ENCODE measurements at regions of chr17 and their contacts with region 1.

Region 1: DNA sequence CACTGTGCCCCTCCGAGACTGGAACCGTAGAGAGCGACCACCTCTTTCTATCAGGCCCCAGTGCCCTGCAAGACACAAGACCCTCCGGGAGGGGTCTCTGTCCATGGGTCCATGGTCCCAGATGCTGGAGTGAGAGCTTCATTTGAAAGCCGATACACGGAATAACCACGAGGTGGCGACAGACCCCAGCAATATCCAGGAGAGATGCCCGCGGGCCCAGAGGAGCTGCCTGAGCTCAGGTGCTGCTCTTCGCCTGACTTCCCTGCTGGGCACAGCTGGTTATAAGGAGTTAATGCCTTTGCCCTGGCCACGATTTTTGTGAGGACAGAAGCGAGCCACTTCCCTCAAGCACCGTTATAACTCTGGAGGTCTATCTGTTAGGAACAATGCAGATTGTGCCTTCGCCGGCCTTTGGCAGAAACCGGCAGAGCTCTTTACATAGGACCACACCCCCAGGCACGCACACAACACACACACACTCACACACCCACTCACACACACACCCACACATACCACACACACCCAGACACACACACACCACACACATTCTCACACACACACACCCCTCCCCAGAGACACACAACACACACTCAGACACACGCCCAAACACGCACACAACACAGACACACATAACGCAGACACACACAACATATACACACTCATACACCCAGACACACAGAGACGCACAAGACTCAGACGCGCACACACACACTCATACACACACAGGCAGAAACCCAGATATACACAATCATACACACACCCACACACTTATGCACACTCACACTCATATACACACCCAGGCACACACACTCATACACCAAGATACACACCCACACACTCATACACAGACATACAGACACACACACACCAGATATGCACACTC is 436.4 kb downstream of the SOX9 start:
- DNase-seq: peak; percentile 81
- ATAC-seq: peak; percentile 86
- H3K4me3 ChIP-seq: no peak overlapping the region
- H3K27ac ChIP-seq: no peak overlapping the region
- H3K4me1 ChIP-seq: peaks cover 23% of the 10 kb centered on the region
- H3K27me3 ChIP-seq: no peaks in the 10 kb centered on the region
- CTCF ChIP-seq: peak; percentile 97
- EP300 ChIP-seq: no peak
- POLR2A ChIP-seq: no peak
- RAD21 ChIP-seq: peak; percentile 96

Region 2: GRCh38 chr17:72515291-72516065 is 41.7 kb before region 1 on chr17:
- CTCF ChIA-PET with region 1: no interaction called
- POLR2A ChIA-PET with region 1: no interaction called
- in situ Hi-C with region 1: no loop called
- intact Hi-C with region 1: no loop called
- DNase-seq: no peak
- ATAC-seq: no peak
- H3K4me3 ChIP-seq: no peak overlapping the region
- H3K27ac ChIP-seq: no peak overlapping the region
- H3K4me1 ChIP-seq: peaks cover 87% of the 10 kb centered on the region
- H3K27me3 ChIP-seq: no peaks in the 10 kb centered on the region
- CTCF ChIP-seq: no peak
- EP300 ChIP-seq: no peak
- POLR2A ChIP-seq: no peak
- RAD21 ChIP-seq: no peak

Region 3: GRCh38 chr17:72609501-72609900 is 52.3 kb after region 1 on chr17:
- CTCF ChIA-PET with region 1: no interaction called
- POLR2A ChIA-PET with region 1: no interaction called
- in situ Hi-C with region 1: no loop called
- intact Hi-C with region 1: no loop called
- DNase-seq: no peak
- ATAC-seq: no peak
- H3K4me3 ChIP-seq: no peak overlapping the region
- H3K27ac ChIP-seq: no peak overlapping the region
- H3K4me1 ChIP-seq: peaks cover 34% of the 10 kb centered on the region
- H3K27me3 ChIP-seq: no peaks in the 10 kb centered on the region
- CTCF ChIP-seq: no peak
- EP300 ChIP-seq: no peak
- POLR2A ChIP-seq: no peak
- RAD21 ChIP-seq: no peak

Region 4: DNA sequence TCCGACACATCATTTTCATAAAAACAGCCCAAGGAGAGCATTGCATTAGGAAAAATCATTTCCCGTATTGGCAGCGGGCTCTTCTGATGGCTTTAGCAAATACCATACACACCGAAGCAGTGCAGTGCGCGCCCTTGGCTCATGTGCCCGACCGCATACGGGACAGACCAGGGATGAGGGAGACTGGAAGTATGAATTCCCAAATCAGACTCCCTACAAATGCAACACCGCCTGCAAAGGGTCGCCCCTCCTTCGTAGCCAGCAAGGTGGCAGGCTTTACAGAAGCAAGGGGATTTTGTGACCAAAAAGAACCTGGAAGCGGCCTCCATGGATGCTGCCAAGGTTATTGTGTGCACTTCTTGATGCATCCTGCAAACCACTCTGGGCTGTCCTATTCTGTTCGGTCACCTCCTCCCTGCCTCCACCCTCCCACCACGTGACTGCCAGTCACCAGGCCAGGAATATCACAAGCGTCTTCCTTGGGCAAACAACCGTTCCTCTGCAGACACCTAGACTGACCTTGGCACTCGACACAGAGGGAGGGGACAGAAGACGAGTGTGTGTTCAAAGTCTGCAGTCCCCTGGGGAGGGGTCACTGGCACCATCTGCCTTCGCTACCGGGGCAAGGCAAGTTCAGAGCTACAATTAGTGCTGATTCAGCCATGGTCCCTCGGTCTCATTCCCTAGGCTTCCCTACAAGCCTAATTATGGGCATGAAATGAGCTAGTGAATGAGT is 74.9 kb after region 1 on chr17:
- CTCF ChIA-PET with region 1: interaction called, 4 read pairs
- POLR2A ChIA-PET with region 1: interaction called, 3 read pairs
- in situ Hi-C with region 1: no loop called
- intact Hi-C with region 1: loop called (anchors 2 kb)
- DNase-seq: peak; percentile 98
- ATAC-seq: peak; percentile 93
- H3K4me3 ChIP-seq: peak overlapping the region; percentile 41 to 68 (median 47)
- H3K27ac ChIP-seq: peak overlapping the region; percentile 51
- H3K4me1 ChIP-seq: peaks cover 56% of the 10 kb centered on the region
- H3K27me3 ChIP-seq: no peaks in the 10 kb centered on the region
- CTCF ChIP-seq: peak; percentile 70
- EP300 ChIP-seq: peak; percentile 79 to 96; a peak in 3 of 4 replicates
- POLR2A ChIP-seq: peak; percentile 49 to 74; a peak in 3 of 4 replicates
- RAD21 ChIP-seq: no peak; the same call in 1 of the 2 replicates

Region 5: DNA sequence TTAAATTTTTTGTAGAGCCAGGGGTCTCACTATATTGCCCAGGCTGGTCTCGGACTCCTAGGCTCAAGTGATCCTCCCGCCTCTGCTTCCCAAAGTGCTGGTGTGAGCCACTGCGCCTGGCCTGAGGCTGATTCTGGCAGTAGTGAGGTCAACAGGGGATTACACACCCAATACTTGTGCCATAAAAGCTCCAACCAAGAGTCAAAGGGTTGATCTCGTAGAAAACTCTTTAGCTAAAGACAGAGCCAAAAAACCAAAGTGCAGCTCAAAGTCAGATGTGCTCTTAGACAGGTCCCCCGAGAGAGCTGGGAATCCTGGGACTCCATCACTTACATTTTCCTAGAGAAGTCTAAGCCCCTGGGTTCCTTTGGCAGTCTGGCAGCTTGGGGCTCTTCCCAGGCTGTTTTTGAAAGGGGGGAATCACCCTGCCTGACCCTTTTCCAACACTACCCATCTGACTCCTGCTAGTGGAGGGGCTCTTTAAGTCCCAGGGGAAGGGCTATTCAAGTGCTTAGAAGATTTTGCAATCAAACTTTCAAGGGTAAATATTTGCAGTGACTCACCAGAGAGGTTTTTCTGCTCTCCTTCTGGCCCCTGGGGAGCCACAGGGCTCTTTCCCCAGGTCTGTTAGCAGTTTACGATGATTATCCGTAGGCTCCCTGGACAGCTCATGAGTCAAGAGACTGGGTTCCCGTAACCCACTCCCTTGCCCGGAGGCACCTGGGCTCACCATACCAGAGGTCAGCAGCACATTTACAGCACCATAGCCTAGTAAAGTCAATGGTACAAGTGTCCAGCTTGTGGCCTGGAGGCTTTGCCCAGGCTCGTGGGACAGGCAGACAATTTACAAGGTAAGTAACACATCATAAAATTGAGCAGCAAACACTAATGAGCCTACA is 126.6 kb after region 1 on chr17:
- CTCF ChIA-PET with region 1: no interaction called
- POLR2A ChIA-PET with region 1: interaction called, 4 read pairs
- in situ Hi-C with region 1: no loop called
- intact Hi-C with region 1: loop called (anchors 2 kb)
- DNase-seq: peak; percentile 97
- ATAC-seq: peak; percentile 92
- H3K4me3 ChIP-seq: peak overlapping the region; percentile 24 to 63 (median 48); a peak in 5 of 6 replicates
- H3K27ac ChIP-seq: peak overlapping the region; percentile 57
- H3K4me1 ChIP-seq: peaks cover 57% of the 10 kb centered on the region
- H3K27me3 ChIP-seq: no peaks in the 10 kb centered on the region
- CTCF ChIP-seq: no peak; the same call in 1 of the 2 replicates
- EP300 ChIP-seq: peak; percentile 77 to 93; a peak in 3 of 4 replicates
- POLR2A ChIP-seq: 0 out of 4 replicates have a peak, but pooled peaks of 1 of the 2 experiments have one; percentile 33
- RAD21 ChIP-seq: no peak

Region 6: GRCh38 chr17:72715906-72716572 is 158.9 kb after region 1 on chr17:
- CTCF ChIA-PET with region 1: no interaction called
- POLR2A ChIA-PET with region 1: no interaction called
- in situ Hi-C with region 1: no loop called
- intact Hi-C with region 1: loop called (anchors 2 kb)
- DNase-seq: peak; percentile 94
- ATAC-seq: peak; percentile 74
- H3K4me3 ChIP-seq: no peak overlapping the region
- H3K27ac ChIP-seq: peak overlapping the region; percentile 47
- H3K4me1 ChIP-seq: peaks cover 29% of the 10 kb centered on the region
- H3K27me3 ChIP-seq: no peaks in the 10 kb centered on the region
- CTCF ChIP-seq: no peak
- EP300 ChIP-seq: peak; percentile 39 to 79; a peak in 3 of 4 replicates
- POLR2A ChIP-seq: no peak
- RAD21 ChIP-seq: no peak

Region 7: GRCh38 chr17:72931163-72931562 is 374.0 kb after region 1 on chr17:
- CTCF ChIA-PET with region 1: no interaction called
- POLR2A ChIA-PET with region 1: no interaction called
- in situ Hi-C with region 1: loop called (anchors 25 kb)
- intact Hi-C with region 1: no loop called
- DNase-seq: no peak
- ATAC-seq: no peak
- H3K4me3 ChIP-seq: no peak overlapping the region
- H3K27ac ChIP-seq: no peak overlapping the region
- H3K4me1 ChIP-seq: peaks cover 55% of the 10 kb centered on the region
- H3K27me3 ChIP-seq: no peaks in the 10 kb centered on the region
- CTCF ChIP-seq: no peak
- EP300 ChIP-seq: no peak
- POLR2A ChIP-seq: no peak
- RAD21 ChIP-seq: no peak

Region 8: GRCh38 chr17:73092523-73093135 is 535.4 kb after region 1 on chr17 and contains the start of gene SLC39A11:
- CTCF ChIA-PET with region 1: no interaction called
- POLR2A ChIA-PET with region 1: no interaction called
- in situ Hi-C with region 1: loop called (anchors 10 kb)
- intact Hi-C with region 1: no loop called
- DNase-seq: peak; percentile 92
- ATAC-seq: peak; percentile 87
- H3K4me3 ChIP-seq: peak within 1 kb of the TSS; percentile 76 to 80 (median 78)
- H3K27ac ChIP-seq: peak within 1 kb of the TSS; percentile 61
- H3K4me1 ChIP-seq: peaks cover 42% of the 10 kb centered on the region
- H3K27me3 ChIP-seq: peaks cover 0 to 24% of the 10 kb centered on the region in 2 experiments; a peak in 3 of 5 replicates
- CTCF ChIP-seq: 0 out of 2 replicates have a peak, but pooled peaks have one; percentile 10
- EP300 ChIP-seq: peak in 1 of 2 experiments; percentile 55; a peak in 2 of 4 replicates
- POLR2A ChIP-seq: peak; percentile 56 to 79
- RAD21 ChIP-seq: peak; percentile 30; the same call in 1 of the 2 replicates
- total RNA-seq, gene SLC39A11: 19.2 and 31.5 TPM in 2 replicates